IMR-90 (cell line): ENCODE measurements at regions of chr9 and their contacts with region 1.

Region 1: GRCh38 chr9:5756633-5757032 is 76.3 kb downstream of the ERMP1 start:
- DNase-seq: no peak
- ATAC-seq: no peak
- H3K4me3 ChIP-seq: no peak overlapping the region
- H3K27ac ChIP-seq: no peak overlapping the region
- H3K4me1 ChIP-seq: no peaks in the 10 kb centered on the region
- H3K27me3 ChIP-seq: no peaks in the 10 kb centered on the region
- CTCF ChIP-seq: no peak
- POLR2A ChIP-seq: no peak
- RAD21 ChIP-seq: no peak

Region 2: DNA sequence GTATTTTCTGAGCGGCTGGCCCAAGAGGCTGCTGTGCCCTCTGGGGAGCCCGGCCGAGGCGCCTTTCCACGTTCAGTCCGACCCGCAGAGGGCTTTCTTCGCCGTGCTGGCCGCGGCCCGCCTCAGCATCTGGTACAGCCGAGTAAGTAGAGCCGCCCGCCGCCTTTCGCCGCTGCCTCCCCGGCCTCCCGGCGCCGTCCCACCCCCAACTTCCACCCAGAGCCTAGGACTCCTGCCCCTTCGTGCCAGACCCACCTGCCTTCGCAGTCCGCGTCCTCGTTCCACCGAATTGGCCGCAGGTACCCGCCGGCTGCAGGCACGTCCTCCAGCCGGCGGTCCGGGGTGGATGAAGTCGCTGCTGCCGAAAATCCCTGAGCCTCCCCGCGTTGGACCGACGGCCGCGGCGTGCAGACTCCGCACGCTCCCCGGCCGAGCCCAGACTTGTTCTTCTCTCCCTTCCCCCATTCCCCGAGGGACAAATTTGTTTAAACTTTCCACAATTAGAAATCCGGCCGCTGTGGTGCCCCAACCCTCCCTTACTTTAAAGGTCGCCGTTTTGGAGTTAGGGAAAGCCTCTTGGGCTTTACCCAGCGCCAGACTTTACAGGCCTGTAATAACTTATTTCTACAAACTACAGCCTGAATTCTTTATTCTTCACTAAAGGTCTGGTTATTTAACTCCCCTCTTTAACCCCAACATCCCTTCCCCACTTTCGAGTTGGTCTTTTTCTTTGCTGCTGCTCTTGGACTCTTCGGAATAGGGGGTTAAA is 127.1 kb before region 1 on chr9:
- CTCF ChIA-PET with region 1: no interaction called
- POLR2A ChIA-PET with region 1: no interaction called
- dilution Hi-C with region 1: no loop called
- in situ Hi-C with region 1: no loop called
- intact Hi-C with region 1: loop called (anchors 5 kb)
- DNase-seq: no peak
- ATAC-seq: peak; percentile 10
- H3K4me3 ChIP-seq: peak overlapping the region; percentile 75
- H3K27ac ChIP-seq: peak overlapping the region; percentile 85
- H3K4me1 ChIP-seq: peaks cover 2% of the 10 kb centered on the region; the same call in 1 of the 2 replicates
- H3K27me3 ChIP-seq: no peaks in the 10 kb centered on the region
- CTCF ChIP-seq: no peak
- POLR2A ChIP-seq: no peak
- RAD21 ChIP-seq: no peak